PC-9 (cell line): ENCODE measurements at regions of chrX and their contacts with region 1.

Region 1: DNA sequence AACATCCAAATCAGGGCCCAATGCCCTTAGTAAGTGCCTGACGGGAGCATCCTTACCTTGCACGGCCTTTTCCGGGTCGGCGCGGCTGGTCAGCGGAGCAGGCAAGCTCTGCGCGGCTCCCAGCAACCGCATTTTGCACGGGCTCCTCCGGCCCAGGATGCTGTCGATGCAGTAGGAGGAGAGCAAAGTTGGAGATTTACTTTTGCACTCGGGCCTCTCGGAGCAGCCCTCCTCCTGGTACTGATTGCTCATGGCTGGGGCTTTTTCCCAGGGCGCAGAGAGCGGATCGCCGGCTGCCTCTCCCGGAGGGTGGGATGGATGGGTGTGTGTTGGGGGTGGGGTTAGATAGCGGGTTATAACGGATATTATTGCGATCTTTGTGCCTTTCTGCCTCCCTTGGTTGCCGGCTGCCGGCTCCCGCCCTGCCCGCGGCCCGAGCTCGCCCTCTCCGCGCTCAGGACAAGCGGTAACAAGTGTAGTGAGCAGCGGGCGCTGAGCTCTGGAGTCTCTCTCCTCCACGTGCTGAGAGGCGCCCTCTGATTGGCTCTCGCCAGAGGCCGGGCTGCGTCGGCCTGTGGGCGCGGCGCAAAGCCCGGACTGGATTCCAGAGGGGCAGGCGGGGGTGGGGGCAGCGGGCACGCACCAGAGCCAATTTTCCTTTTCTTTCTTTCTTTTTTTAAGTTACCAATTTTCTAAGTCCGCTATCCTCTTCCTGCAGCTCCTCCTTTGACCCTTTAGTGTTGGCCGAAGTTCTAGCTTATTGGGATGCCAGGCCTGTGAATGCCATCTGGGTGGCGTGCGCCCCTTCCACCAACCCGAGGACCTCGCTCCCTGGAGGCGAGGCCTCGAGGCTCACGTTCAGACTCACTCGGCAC is at the start of gene ARX:
- DNase-seq: peak in 1 of 2 experiments; percentile 38
- H3K4me3 ChIP-seq: no peak within 1 kb of the TSS
- H3K27ac ChIP-seq: no peak within 1 kb of the TSS
- H3K4me1 ChIP-seq: no peaks in the 10 kb centered on the region
- H3K27me3 ChIP-seq: no peaks in the 10 kb centered on the region; the same call in 1 of the 2 replicates
- CTCF ChIP-seq: no peak
- total RNA-seq, gene ARX: not detected in 2 replicates

Region 2: DNA sequence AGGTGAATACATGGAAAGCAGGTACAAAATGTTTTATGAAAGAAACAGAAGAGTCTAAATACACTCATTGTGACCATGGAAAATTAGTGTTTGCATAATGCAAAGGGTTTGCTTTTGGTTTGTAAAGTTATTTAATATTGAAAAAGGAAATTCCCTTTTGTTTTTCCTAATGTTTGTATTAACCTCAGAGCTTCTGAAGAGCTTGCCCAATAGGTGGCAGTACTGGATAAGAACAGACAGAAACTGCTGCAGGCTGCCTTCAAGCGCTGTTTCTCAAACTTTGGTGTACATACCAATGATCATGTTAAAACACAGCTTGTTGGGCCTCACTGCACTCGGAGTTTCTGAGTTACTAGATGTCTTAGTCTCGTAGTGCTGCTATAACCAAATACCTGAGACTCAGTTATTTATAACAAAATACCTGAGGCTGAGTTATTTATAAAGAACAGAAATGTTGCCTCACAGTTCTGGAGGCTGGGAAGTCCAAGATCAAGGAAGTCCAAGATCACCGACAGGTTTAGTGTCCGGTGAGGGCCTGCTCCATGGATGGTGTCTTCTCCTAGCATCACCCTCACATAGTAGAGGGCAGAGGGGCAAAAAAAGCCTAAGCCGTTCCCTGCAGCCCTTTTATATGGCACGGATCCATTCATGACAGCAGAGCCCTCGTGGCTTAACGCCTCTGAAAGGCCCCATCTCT is 756.0 kb before region 1 on chrX:
- CTCF ChIA-PET with region 1: no interaction called
- POLR2A ChIA-PET with region 1: no interaction called
- intact Hi-C with region 1: loop called (anchors 10 kb)
- DNase-seq: peak in 1 of 2 experiments; percentile 48
- H3K4me3 ChIP-seq: no peak overlapping the region
- H3K27ac ChIP-seq: no peak overlapping the region
- H3K4me1 ChIP-seq: no peaks in the 10 kb centered on the region
- H3K27me3 ChIP-seq: no peaks in the 10 kb centered on the region
- CTCF ChIP-seq: peak; percentile 71

Region 3: DNA sequence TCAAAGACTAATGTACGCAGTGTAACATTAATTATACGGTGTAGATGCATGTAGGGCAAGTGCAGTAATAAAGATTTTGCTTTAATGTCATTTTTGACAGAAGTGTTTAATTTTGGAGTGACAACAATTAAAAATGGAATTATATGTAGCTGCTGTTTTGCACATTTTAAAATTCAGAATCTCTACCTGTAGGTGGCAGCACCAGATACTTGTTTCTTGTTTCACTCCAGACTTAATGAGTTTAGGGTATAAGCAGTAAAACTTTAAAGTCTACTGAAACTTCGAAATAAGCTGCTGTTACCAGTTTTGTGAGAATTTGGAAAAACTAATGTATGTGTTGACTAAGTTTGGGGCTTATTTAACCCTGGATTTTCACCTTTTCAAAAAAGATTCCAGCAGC is 177.1 kb before region 1 on chrX:
- CTCF ChIA-PET with region 1: interaction called, 4 read pairs
- POLR2A ChIA-PET with region 1: no interaction called
- intact Hi-C with region 1: loop called (anchors 5 kb)
- DNase-seq: peak in 1 of 2 experiments; percentile 2
- H3K4me3 ChIP-seq: no peak overlapping the region
- H3K27ac ChIP-seq: no peak overlapping the region
- H3K4me1 ChIP-seq: no peaks in the 10 kb centered on the region
- H3K27me3 ChIP-seq: no peaks in the 10 kb centered on the region
- CTCF ChIP-seq: peak; percentile 69

Region 4: DNA sequence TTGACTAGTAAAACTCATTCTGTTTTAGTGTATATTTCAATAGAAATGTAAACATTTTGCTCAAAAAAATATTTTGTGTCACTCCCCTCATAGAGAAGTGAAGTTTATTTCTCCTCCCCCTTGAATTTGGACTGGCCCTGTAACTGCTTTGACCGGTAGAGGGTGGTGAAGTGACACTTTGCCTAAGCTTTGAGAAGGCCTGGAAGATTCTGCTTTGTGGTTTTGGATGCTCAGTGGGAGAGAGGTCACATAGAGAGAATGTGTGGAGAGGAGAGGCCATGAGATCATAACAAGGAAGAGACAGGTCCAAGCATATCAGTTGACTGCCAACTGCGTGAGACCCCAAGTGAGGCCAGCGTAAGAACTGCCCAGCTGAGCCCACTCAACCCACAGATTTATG is 19.2 kb after region 1 on chrX:
- CTCF ChIA-PET with region 1: no interaction called
- POLR2A ChIA-PET with region 1: no interaction called
- intact Hi-C with region 1: no loop called
- DNase-seq: no peak
- H3K4me3 ChIP-seq: no peak overlapping the region
- H3K27ac ChIP-seq: no peak overlapping the region
- H3K4me1 ChIP-seq: no peaks in the 10 kb centered on the region
- H3K27me3 ChIP-seq: no peaks in the 10 kb centered on the region
- CTCF ChIP-seq: no peak